GM10248 (cell line): ENCODE measurements at regions of chr15 and their contacts with region 1.

Region 1: GRCh38 chr15:43204016-43204901 is 16.6 kb downstream of the EPB42 start:
- DNase-seq: peak; percentile 69
- CTCF ChIP-seq: peak; percentile 75

Region 2: DNA sequence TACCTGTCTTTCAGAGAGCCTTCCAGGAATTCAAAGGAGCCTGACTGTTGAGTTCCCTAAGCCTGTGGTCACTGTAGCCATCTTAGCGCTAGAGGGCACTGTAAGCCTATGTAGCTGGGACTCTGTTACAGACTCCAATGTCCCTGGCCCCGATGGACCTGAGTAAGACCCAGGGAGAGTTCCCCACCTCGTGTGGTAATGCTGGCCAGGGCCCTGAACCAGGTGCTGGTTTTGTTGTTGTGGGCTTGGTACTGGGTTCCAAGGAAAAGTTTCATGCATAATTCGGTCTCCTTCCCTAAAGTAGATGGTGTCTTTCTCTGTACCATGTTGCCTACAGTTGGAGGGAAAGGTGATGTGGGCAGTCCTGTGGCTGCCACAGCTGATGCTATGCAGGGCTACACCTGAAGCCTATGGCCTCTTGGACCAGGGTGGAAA is 499.8 kb before region 1 on chr15:
- CTCF ChIA-PET with region 1: interaction called, 19 read pairs
- POLR2A ChIA-PET with region 1: no interaction called
- DNase-seq: peak; percentile 75
- CTCF ChIP-seq: peak; percentile 60

Region 3: DNA sequence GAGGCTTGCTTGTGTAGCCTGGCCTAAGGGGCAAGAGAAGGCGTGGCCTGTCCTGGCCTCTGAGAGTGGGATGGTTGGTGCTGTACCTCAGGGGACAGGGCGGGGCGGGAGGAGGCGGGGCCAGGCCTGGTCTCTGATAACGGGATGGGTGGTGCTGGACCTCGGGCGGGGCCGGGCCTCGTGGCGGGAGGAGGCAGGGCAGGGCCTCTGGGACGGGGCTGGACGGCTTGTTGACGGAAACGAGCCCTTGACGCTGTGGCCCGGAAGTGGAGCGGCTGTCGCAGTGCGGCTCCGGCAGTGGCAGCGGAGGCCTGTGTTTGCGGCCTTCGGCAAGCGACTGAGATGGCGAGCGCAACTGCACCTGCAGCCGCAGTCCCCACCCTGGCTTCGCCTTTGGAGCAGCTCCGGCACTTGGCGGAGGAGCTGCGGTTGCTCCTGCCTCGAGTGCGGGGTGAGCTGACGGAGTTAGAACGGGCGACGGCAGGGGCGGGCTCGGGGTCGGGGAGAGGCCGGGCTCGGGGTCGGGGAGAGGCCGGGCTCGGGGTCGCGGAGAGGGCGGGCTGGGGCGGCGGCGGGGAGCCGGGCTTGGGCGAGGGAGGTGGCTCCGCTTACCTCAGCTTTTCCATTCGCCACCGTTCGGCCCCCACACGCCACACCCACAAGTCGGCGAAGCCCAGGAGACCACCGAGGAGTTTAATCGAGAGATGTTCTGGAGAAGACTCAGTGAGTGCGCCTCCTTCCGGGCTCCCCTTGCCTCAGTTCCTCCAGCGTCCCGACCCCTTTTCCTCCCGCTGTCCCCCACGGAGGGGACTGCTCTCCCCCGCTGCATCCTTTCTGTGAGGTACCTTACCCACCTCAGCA is 18.9 kb before region 1 on chr15 and contains the start of gene CCNDBP1:
- CTCF ChIA-PET with region 1: interaction called, 52 read pairs
- POLR2A ChIA-PET with region 1: no interaction called
- DNase-seq: peak; percentile 99
- CTCF ChIP-seq: peak; percentile 30

Region 4: DNA sequence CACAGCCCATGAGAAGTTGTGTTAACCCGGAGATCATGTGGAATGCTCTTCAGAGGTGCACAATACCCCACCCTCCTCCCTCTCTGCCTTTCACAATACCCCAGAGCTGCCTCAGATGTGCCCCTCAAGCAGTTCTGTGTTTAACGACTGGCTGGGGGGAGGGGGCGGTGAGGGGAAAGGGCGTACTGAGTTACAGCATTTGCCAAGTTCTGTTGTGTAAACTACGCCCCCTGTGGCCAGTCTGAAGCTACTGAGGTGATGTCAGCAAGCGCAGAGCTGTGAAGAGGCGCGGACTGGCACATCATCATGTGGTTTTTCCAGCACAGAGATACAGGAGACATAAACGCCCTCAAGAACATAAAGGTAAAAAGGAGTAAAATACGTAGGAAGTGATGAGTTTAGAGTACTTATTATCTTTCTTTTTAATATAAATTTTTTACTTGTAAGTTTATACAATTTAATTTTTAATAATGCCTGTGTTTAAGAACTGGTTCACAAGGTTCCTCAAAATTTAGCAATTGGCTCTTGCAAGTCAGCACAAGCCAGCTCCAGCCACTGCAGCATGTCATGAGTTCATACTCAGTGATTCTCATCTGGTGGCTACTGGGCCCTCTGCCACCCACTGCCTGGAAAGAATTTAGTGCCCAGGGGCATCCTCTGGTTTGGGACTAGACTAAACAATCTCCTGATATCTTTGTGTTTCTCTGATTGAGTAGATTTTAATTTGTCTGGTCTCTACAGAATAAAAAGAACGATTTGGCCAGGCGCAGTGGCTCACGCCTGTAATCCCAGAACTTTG is 14.8 kb after region 1 on chr15:
- CTCF ChIA-PET with region 1: interaction called, 24 read pairs
- POLR2A ChIA-PET with region 1: no interaction called
- DNase-seq: no peak
- CTCF ChIP-seq: no peak

Region 5: DNA sequence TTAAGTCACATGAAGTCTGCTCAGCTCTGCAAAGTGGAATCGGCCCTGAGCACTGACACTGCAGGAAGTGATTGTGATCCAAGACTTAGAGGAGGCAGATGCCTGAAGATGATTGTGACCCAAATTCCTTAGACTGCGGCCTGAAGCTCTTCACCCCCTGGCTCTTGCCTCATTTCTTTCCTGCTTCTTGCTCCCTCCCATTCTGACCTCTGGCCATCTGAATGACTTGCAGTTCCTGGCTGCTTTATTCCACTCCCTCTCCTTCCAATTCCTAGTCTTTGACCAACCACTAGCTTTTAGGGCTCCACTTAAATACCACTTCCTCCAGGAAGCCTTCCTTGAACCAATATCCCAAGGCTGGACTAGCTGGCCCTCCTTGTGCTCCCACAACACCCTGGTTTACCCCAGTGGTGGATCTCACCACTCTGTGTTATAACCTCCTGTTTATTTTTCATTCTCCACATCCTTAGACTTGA is 26.4 kb after region 1 on chr15:
- CTCF ChIA-PET with region 1: interaction called, 25 read pairs
- POLR2A ChIA-PET with region 1: no interaction called
- DNase-seq: no peak
- CTCF ChIP-seq: no peak

Region 6: GRCh38 chr15:43268111-43269105 is 64.1 kb after region 1 on chr15:
- CTCF ChIA-PET with region 1: interaction called, 14 read pairs
- POLR2A ChIA-PET with region 1: no interaction called
- DNase-seq: peak; percentile 57
- CTCF ChIP-seq: peak; percentile 59